ENCODE measurements at regions of chr13 and their contacts with region 1.

Region 1: GRCh38 chr13:93794197-93794885 is 567.7 kb downstream of the GPC6 start:
- DNase-seq: peak; percentile 16
- H3K4me3 Mint-ChIP-seq: no peak overlapping the region
- H3K27ac Mint-ChIP-seq: no peak overlapping the region
- H3K4me1 Mint-ChIP-seq: peaks cover 8% of the 10 kb centered on the region
- H3K27me3 Mint-ChIP-seq: peaks cover 15% of the 10 kb centered on the region

Region 2: DNA sequence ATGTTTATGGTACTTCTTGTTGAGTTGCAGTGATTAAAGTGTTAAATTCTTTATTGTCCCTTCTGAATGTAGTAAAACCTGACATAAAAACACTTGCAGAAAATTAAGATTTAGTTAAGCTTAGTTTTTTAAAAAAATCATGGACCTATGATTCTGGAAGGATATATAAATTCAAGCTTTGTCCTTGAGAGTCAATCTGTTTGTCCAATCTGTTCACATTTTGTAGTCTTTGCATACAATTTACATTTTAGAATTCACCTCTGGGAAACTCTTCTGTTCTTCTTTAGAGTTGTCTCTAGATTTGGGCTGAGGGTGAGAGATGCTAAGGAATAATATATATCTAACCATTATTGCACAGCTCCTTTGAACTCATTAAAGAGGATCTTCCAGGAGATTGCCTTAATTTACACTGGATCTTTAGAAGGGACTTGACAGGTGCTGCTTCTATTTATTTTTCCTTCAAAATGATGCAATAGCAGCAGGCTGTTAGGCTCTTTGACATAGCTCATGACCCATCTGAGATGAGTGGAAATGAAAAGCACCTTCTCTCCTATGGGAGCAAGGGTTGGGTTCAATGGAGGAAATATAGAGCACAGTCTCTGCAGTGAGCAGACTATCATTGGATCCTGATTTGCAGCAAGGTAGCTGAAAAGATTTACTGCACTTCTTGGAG is 133.8 kb before region 1 on chr13:
- intact Hi-C with region 1: no loop called
- DNase-seq: no peak
- H3K4me3 Mint-ChIP-seq: no peak overlapping the region
- H3K27ac Mint-ChIP-seq: no peak overlapping the region
- H3K4me1 Mint-ChIP-seq: no peaks in the 10 kb centered on the region
- H3K27me3 Mint-ChIP-seq: no peaks in the 10 kb centered on the region

Region 3: GRCh38 chr13:93690139-93690538 is 104.2 kb before region 1 on chr13:
- intact Hi-C with region 1: no loop called
- DNase-seq: no peak
- H3K4me3 Mint-ChIP-seq: no peak overlapping the region
- H3K27ac Mint-ChIP-seq: no peak overlapping the region
- H3K4me1 Mint-ChIP-seq: no peaks in the 10 kb centered on the region
- H3K27me3 Mint-ChIP-seq: no peaks in the 10 kb centered on the region

Region 4: GRCh38 chr13:93751117-93751516 is 43.2 kb before region 1 on chr13:
- intact Hi-C with region 1: loop called (anchors 1 kb)
- DNase-seq: no peak
- H3K4me3 Mint-ChIP-seq: no peak overlapping the region
- H3K27ac Mint-ChIP-seq: no peak overlapping the region
- H3K4me1 Mint-ChIP-seq: no peaks in the 10 kb centered on the region
- H3K27me3 Mint-ChIP-seq: no peaks in the 10 kb centered on the region

Region 5: DNA sequence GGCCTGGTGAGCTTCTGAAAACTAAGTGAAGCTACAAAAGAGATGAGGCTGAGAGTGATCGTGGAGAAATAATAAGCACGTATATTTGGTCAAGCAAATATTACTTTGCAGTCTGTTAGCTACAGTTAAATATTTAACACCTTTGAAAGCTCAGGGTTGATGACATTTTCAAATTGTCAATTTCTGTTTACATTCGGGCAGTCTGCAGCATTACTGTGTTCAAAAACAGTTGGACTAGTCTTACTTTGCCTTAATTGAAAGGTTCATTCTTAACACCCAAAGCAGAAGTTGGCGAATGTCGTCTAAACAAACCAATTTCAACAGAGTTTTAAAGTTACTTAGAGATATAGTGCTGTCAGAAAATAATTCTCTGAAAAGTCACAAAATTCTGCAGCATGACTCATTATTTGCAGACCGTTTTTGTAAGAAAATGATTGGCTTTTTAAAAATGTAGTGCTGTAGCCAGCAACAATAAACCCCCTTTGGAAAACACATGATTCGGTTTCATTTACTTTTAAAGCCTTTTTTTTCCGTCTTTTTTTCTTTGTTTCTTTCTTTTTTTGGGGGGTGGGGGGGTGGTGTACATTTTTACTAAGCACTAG is 18.7 kb before region 1 on chr13:
- intact Hi-C with region 1: no loop called
- DNase-seq: no peak
- H3K4me3 Mint-ChIP-seq: no peak overlapping the region
- H3K27ac Mint-ChIP-seq: no peak overlapping the region
- H3K4me1 Mint-ChIP-seq: no peaks in the 10 kb centered on the region
- H3K27me3 Mint-ChIP-seq: no peaks in the 10 kb centered on the region

Region 6: DNA sequence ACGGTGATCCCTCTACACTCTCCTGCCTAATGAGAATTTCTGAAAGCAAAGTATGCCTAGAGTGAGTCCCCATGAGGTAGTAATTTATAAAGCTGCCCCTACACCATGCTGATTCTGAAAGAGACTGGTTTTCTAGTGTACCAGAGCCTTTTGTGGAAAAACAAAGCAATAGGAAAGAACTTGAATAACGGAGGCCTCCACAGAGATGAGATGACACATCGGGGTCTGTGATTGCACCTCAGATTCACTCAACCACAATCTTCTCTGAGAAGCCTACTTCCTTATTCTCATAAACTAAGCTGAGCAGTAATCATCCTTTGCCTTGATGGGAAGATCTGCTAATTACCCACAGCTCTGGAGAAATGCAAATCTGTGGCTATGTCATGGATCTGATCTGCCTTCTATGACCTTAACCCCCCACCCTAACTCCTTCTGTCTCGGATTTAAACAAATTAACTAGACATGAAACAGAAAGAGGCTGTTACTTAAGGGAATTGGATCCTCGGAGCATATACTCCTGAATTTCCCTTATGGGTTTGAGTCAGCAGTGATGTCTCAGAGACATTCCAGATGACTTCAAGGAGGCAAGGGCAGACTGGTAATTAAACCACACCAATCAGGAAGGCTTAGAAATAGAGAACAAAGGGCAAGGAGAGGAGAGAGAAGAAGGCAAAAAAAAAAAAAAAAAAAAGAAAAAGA is 557.1 kb after region 1 on chr13:
- intact Hi-C with region 1: loop called (anchors 5 kb)
- DNase-seq: no peak
- H3K4me3 Mint-ChIP-seq: no peak overlapping the region
- H3K27ac Mint-ChIP-seq: peak overlapping the region; percentile 8
- H3K4me1 Mint-ChIP-seq: peaks cover 19% of the 10 kb centered on the region
- H3K27me3 Mint-ChIP-seq: peaks cover 4% of the 10 kb centered on the region

Measured in activated T-helper 2 cell treated with anti-CD3 and anti-CD28 coated beads, Interferon-gamma antibody, Interleukin-2, Interleukin-4, amounts not matched to agents 10 μg/mL and 5 μg/mL and 100 μg/mL, durations not matched to agents 14 hours and 24 hours and 36 hours (primary cell).